ENCODE measurements at regions of chr17 and their contacts with region 1.

Region 1: DNA sequence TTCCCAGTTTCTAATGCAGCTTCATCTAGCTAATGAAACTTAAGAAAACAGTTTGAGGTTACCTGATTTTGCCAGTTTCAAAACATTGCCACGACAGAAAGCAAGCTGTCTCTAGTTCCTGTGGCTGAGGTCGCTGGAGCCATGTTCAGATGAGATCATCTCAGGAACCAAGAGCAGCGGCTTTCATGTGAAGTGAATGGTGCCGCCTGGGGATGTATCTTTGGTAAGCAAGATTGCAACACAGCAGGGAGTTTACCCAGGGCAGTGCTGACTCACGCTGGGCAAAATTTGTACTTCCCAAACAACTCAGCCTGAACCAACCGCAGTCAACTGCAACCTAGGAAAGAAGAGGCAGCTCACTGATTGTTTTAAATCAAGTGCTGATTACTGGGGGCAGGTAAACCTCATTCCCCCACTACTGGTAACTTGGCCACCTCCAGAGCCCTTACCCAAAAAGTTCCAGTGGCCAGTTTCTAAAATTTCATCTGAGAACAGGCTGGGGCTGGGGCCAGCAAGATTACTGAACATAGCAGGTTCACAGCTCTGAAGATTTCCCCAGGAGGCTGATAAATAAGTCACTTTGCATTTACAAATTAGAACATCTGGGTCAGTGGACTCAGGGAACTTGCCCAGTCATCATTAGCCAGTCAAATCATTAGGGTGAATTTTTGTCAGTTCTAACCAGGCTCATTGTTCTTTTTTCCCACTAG is at the start of gene RFFL:
- DNase-seq: peak; percentile 84
- H3K4me3 Mint-ChIP-seq: peak within 1 kb of the TSS; percentile 5
- H3K27ac Mint-ChIP-seq: peak within 1 kb of the TSS; percentile 75
- H3K4me1 Mint-ChIP-seq: peaks cover 49% of the 10 kb centered on the region
- H3K27me3 Mint-ChIP-seq: no peaks in the 10 kb centered on the region
- total RNA-seq, gene RFFL: 21.3 and 25.4 TPM in 2 replicates

Region 2: GRCh38 chr17:34886831-34887230 is 176.8 kb before region 1 on chr17:
- intact Hi-C with region 1: no loop called
- DNase-seq: no peak
- H3K4me3 Mint-ChIP-seq: no peak overlapping the region
- H3K27ac Mint-ChIP-seq: no peak overlapping the region
- H3K4me1 Mint-ChIP-seq: no peaks in the 10 kb centered on the region
- H3K27me3 Mint-ChIP-seq: peaks cover 36% of the 10 kb centered on the region

Region 3: GRCh38 chr17:34980681-34981537 is 82.8 kb before region 1 on chr17:
- intact Hi-C with region 1: loop called (anchors 2 kb)
- DNase-seq: peak; percentile 74
- H3K4me3 Mint-ChIP-seq: peak overlapping the region; percentile 94
- H3K27ac Mint-ChIP-seq: peak overlapping the region; percentile 96
- H3K4me1 Mint-ChIP-seq: peaks cover 39% of the 10 kb centered on the region
- H3K27me3 Mint-ChIP-seq: no peaks in the 10 kb centered on the region

Region 4: GRCh38 chr17:35046740-35047283 is 16.9 kb before region 1 on chr17:
- intact Hi-C with region 1: loop called (anchors 1 kb)
- DNase-seq: peak; percentile 59
- H3K4me3 Mint-ChIP-seq: peak overlapping the region; percentile 77
- H3K27ac Mint-ChIP-seq: peak overlapping the region; percentile 95
- H3K4me1 Mint-ChIP-seq: peaks cover 49% of the 10 kb centered on the region
- H3K27me3 Mint-ChIP-seq: no peaks in the 10 kb centered on the region

Region 5: GRCh38 chr17:35082073-35082657 is 18.5 kb after region 1 on chr17:
- intact Hi-C with region 1: loop called (anchors 2 kb)
- DNase-seq: no peak
- H3K4me3 Mint-ChIP-seq: no peak overlapping the region
- H3K27ac Mint-ChIP-seq: peak overlapping the region; percentile 82
- H3K4me1 Mint-ChIP-seq: peaks cover 64% of the 10 kb centered on the region
- H3K27me3 Mint-ChIP-seq: no peaks in the 10 kb centered on the region

Region 6: DNA sequence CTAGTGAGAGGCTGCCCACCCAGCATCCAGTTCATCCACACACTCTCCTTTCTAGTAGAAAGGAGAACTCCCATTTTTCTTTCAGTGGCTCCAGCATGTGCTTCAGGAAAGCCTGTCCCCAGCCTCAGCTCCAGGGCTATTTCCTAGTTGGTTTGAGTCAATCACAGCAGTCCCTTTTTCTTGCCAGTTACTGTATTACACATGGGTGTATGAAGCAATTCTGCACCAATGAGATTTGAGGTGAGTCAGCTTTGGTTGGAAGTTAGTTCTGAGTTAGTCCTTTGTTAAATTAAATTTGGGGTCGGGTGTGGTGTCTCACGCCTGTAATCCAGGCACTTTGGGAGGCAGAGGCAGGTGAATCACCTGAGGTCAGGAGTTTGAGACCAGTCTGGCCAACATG is 31.2 kb after region 1 on chr17:
- intact Hi-C with region 1: no loop called
- DNase-seq: no peak
- H3K4me3 Mint-ChIP-seq: no peak overlapping the region
- H3K27ac Mint-ChIP-seq: no peak overlapping the region
- H3K4me1 Mint-ChIP-seq: peaks cover 5% of the 10 kb centered on the region
- H3K27me3 Mint-ChIP-seq: no peaks in the 10 kb centered on the region

Region 7: DNA sequence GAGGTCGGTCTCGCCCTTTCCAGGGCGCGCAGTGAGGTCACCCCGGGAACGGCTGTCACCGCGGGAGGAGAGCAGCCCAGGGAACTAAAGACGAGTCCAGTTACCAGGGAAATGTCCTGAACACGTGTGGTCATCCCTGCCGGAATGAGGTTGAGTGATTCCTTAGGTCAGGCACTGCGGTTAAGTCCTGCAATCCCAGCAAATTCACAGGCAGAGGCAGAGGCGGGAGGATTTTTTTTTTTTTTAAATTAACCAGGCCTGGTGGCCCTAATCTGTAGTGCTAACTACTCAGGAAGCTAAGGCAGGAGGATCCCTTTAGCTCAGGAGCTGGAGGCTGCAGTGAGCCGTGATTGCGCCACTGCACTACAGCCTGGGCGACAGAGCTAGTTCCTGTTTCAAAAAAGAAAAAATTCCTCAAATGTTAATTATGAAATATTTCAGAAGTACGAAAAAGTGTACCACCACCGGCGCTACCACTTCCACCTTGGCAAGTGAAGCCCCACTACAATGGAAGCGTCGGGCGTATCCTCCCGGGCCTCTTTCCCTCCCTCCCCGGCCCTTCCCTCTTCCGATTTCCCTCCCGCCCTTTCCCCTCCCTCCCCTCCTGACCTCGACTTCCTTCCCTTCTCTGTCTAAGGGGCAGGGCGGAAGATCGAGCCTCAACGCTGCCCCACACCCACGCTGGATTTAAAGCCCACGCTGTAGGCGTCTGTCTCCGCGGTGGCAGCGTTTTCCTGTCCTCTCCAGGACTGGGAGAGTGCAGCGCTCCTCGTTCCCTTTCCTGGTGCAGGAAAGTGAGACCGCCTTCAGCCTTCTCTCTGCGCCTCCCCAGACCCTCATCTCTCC is 282.5 kb after region 1 on chr17:
- intact Hi-C with region 1: loop called (anchors 10 kb)
- DNase-seq: no peak
- H3K4me3 Mint-ChIP-seq: peak overlapping the region; percentile 87
- H3K27ac Mint-ChIP-seq: peak overlapping the region; percentile 65
- H3K4me1 Mint-ChIP-seq: peaks cover 38% of the 10 kb centered on the region
- H3K27me3 Mint-ChIP-seq: peaks cover 10% of the 10 kb centered on the region